A673 (cell line): ENCODE measurements at regions of chr4 and their contacts with region 1.

Region 1: DNA sequence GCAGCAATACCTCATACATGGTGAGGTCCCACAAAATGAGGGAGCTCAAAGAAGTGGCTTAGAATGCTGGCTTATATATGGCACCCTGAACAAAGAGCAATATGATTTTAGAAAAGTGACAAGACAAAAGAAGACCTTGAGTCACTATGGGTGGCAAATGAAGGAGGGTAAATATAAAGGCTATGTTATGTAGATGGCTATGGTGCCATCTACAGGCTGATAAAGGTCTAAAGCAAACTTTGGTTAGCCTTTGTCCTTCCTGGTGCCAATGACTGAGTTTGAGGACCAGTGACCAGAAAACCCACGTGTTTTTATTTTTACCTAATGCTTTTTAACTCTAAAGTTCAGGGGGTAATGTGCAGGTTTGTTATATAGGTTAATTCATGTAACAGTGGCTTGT is 151.8 kb downstream of the CCNG2 start:
- DNase-seq: peak; percentile 25
- H3K4me3 ChIP-seq: no peak overlapping the region
- H3K27ac ChIP-seq: no peak overlapping the region
- H3K4me1 ChIP-seq: no peaks in the 10 kb centered on the region
- H3K27me3 ChIP-seq: no peaks in the 10 kb centered on the region
- CTCF ChIP-seq: peak; percentile 44

Region 2: GRCh38 chr4:76420762-76421581 is 887.9 kb before region 1 on chr4 and contains the start of gene CCDC158:
- CTCF ChIA-PET with region 1: interaction called, 10 read pairs
- POLR2A ChIA-PET with region 1: no interaction called
- intact Hi-C with region 1: no loop called
- DNase-seq: no peak
- H3K4me3 ChIP-seq: no peak within 1 kb of the TSS
- H3K27ac ChIP-seq: no peak within 1 kb of the TSS
- H3K4me1 ChIP-seq: no peaks in the 10 kb centered on the region
- H3K27me3 ChIP-seq: no peaks in the 10 kb centered on the region
- CTCF ChIP-seq: no peak
- total RNA-seq, gene CCDC158: not detected in 2 replicates

Region 3: DNA sequence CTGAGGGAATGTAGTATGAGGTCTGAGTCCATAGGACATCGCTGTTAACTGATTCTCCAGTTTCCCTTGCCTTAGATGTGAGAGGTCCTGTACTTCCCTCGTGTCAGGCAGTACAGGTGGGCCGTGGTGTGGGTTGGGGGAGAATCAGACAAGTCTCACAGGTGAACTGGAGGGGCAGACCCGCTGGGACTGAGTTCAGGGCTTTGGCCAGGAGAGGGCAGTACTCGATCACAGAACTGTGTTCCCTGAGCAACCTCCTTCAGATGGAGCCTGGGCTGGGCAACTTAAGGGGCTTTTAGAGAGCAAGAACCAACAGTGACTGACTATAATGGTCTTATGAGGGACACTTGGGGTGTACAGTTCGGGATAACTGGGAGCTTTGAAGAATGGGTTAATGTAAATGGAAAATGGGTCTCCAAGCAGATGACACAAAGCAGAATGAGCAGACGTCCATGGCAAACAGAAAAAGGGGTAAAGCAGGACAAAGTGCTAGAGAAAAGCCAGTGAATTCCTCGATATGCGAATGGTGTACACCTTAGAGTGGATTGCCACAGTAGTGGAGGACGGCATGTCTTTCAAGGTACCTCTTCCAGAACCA is 68.3 kb before region 1 on chr4:
- CTCF ChIA-PET with region 1: interaction called, 4 read pairs
- POLR2A ChIA-PET with region 1: no interaction called
- intact Hi-C with region 1: loop called (anchors 5 kb)
- DNase-seq: peak; percentile 45
- H3K4me3 ChIP-seq: no peak overlapping the region
- H3K27ac ChIP-seq: no peak overlapping the region
- H3K4me1 ChIP-seq: no peaks in the 10 kb centered on the region
- H3K27me3 ChIP-seq: peaks cover 9% of the 10 kb centered on the region
- CTCF ChIP-seq: peak; percentile 62